ENCODE measurements at regions of chr2 and their contacts with region 1.

Region 1: GRCh38 chr2:68362069-68362468 is 3.0 kb upstream of the PLEK start:
- DNase-seq: peak; percentile 64
- CTCF ChIP-seq: peak; percentile 79

Region 2: DNA sequence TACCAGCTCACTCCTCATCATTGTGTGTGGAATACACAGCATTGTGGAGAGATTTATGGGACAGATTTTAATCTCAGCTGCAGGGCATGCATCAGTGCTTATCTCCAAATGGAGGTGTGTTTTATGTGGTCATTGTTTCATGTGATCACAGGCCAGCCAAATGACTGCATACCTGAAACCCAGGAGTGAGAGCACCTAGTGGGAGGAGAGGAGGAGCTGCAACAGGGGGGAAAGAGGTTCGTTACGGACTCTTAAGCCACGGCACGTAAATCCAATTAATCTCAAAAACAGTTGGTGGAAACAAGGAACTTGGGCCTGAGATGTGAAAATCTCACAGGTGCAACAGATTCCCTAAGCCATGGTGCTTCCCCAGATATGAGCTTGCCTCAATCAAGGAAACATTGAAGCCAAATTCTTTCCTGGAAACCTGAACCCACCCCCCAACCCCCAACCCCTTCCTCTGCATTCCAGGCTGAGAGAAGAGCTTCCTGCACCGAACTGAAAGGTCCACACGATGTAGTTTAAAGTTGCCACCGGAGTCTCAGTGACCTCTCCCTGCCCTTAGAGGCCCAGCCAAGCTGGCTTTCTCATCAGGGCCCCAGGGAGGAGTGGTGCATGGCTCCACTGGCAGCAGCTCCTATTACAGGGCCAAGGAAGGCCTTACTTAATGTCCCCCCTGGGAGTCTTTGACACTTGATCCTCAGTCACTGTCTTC is 466.7 kb before region 1 on chr2:
- in situ Hi-C with region 1: no loop called
- DNase-seq: no peak
- CTCF ChIP-seq: no peak

Region 3: GRCh38 chr2:68434981-68435380 is 72.9 kb after region 1 on chr2:
- in situ Hi-C with region 1: loop called (anchors 10 kb)
- DNase-seq: no peak
- CTCF ChIP-seq: no peak

Measured in GM13976 (cell line).